ENCODE measurements at regions of chr5 and their contacts with region 1.

Region 1: GRCh38 chr5:52915176-52915875 is 73.8 kb upstream of the ITGA2 start:
- DNase-seq: peak; percentile 37
- H3K4me3 ChIP-seq: peak overlapping the region; percentile 21; the same call in 1 of the 2 replicates
- H3K27me3 ChIP-seq: no peaks in the 10 kb centered on the region
- CTCF ChIP-seq: peak; percentile 65

Region 2: GRCh38 chr5:52392321-52392720 is 523.0 kb before region 1 on chr5:
- CTCF ChIA-PET with region 1: no interaction called
- POLR2A ChIA-PET with region 1: no interaction called
- DNase-seq: no peak
- H3K4me3 ChIP-seq: no peak overlapping the region
- H3K27me3 ChIP-seq: no peaks in the 10 kb centered on the region
- CTCF ChIP-seq: no peak

Region 3: DNA sequence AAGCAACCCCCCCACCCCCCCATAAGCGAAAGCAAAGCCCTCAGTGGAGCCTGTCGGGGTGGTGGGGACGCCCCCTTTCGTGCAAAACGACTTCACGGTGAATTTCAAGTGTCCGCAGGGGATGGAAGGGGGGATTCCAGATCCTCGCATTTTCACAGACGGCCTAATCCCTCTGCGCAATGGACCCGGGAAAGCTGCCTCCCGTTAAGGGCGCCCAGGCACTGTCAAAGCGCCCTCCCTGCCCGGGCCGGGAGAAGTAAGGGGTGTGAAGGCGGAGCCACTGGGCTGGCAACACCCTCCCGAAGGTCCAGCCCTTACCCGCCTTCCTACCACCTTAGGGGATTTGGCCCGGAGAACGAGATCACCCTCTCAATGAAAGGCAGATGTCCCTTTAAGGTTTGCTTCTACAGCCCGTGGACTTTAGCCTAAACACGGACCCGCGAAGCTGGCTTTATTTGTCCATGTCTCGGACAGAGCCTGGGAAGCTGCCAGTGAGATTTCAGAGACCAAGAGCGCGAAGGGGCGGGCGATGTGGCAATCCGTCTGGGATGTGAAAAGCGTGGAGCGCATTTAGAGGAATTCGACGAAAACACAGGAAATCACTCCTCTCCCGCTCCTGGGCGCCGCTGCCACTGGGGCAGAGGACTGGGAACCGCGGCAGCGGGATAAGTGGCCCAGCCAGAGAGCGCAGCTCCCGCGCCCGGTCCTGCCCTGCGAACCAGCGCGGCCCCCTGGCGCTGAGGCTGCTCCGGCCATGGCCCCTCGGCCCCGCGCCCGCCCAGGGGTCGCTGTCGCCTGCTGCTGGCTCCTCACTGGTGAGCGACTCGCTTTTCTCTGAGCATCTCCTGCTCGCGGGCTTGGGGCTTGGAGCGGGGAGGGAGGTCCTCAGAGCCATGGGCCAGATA is 127.5 kb before region 1 on chr5 and contains the starts of genes ITGA1 and PELO:
- CTCF ChIA-PET with region 1: interaction called, 13 read pairs
- POLR2A ChIA-PET with region 1: no interaction called
- DNase-seq: no peak
- H3K4me3 ChIP-seq: peak within 1 kb of the TSS; percentile 57
- H3K27me3 ChIP-seq: no peaks in the 10 kb centered on the region
- CTCF ChIP-seq: peak; percentile 26; the same call in 1 of the 2 replicates
- polyA plus RNA-seq, gene ITGA1: 35.2 and 53.0 TPM in 2 replicates
- polyA plus RNA-seq, gene PELO: 26.7 and 29.6 TPM in 2 replicates

Region 4: GRCh38 chr5:52811067-52811749 is 104.1 kb before region 1 on chr5:
- CTCF ChIA-PET with region 1: no interaction called
- POLR2A ChIA-PET with region 1: no interaction called
- DNase-seq: no peak
- H3K4me3 ChIP-seq: no peak overlapping the region
- H3K27me3 ChIP-seq: no peaks in the 10 kb centered on the region
- CTCF ChIP-seq: no peak